MCF 10A (cell line): ENCODE measurements at regions of chr1 and their contacts with region 1.

Region 1: DNA sequence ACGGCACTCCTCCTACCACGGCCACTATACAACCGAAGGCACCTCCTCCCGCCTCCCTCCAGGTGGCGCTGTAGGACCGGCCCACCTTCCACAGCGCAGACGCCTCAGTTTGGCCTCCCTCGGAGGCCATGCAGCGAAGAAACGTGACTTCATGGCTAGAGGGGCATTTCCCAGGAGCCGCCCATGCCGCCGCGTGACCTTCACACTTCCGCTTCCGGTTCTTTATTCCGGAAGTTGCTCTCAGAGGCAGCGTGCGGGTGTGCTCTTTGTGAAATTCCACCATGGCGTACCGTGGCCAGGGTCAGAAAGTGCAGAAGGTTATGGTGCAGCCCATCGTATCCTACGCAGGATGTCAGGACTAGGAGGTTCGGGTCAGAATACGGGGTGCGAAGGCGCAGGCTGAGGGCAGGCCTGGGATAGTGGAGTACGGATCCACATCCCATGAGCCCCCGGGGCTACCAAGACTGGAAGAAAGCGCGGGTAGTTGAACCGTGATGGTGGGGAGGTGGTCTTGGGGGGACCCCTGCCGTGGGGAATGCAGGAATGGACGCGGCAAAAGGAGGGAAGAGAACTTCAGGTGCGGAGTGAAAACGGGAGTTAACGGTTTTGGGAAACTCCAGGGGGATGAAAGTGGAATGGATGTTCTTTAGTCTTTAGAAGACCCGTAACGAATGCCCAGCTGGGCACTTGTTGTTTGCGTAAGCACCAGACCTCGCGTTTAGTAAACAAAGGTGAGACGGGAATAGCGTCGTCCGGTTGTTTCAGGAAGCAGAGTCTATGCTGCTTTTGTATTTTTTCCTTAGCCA is at the start of gene SNRPE:
- DNase-seq: peak; percentile 100
- H3K4me3 Mint-ChIP-seq: peak within 1 kb of the TSS; percentile 100
- H3K27ac Mint-ChIP-seq: peak within 1 kb of the TSS; percentile 100
- H3K4me1 Mint-ChIP-seq: peaks cover 43% of the 10 kb centered on the region
- H3K27me3 Mint-ChIP-seq: no peaks in the 10 kb centered on the region
- CTCF ChIP-seq: peak; percentile 100
- total RNA-seq, gene SNRPE: 358 and 423 TPM in 2 replicates

Region 2: GRCh38 chr1:203835494-203835893 is 26.1 kb before region 1 on chr1:
- CTCF ChIA-PET with region 1: interaction called, 11 read pairs
- POLR2A ChIA-PET with region 1: interaction called, 7 read pairs
- intact Hi-C with region 1: no loop called
- DNase-seq: no peak
- H3K4me3 Mint-ChIP-seq: no peak overlapping the region
- H3K27ac Mint-ChIP-seq: no peak overlapping the region
- H3K4me1 Mint-ChIP-seq: no peaks in the 10 kb centered on the region
- H3K27me3 Mint-ChIP-seq: no peaks in the 10 kb centered on the region
- CTCF ChIP-seq: no peak

Region 3: GRCh38 chr1:203926025-203926540 is 64.5 kb after region 1 on chr1:
- CTCF ChIA-PET with region 1: no interaction called
- POLR2A ChIA-PET with region 1: interaction called, 3 read pairs
- intact Hi-C with region 1: loop called (anchors 1 kb)
- DNase-seq: peak; percentile 85
- H3K4me3 Mint-ChIP-seq: no peak overlapping the region
- H3K27ac Mint-ChIP-seq: peak overlapping the region; percentile 57
- H3K4me1 Mint-ChIP-seq: peaks cover 21% of the 10 kb centered on the region
- H3K27me3 Mint-ChIP-seq: no peaks in the 10 kb centered on the region
- CTCF ChIP-seq: no peak

Region 4: GRCh38 chr1:204151552-204152309 is 290.1 kb after region 1 on chr1 and contains the start of gene ETNK2:
- CTCF ChIA-PET with region 1: interaction called, 16 read pairs
- POLR2A ChIA-PET with region 1: interaction called, 22 read pairs
- intact Hi-C with region 1: no loop called
- DNase-seq: peak; percentile 36
- H3K4me3 Mint-ChIP-seq: peak within 1 kb of the TSS; percentile 68
- H3K27ac Mint-ChIP-seq: peak within 1 kb of the TSS; percentile 78
- H3K4me1 Mint-ChIP-seq: peaks cover 48% of the 10 kb centered on the region
- H3K27me3 Mint-ChIP-seq: no peaks in the 10 kb centered on the region
- CTCF ChIP-seq: no peak
- total RNA-seq, gene ETNK2: 6.7 and 9.5 TPM in 2 replicates